K562 (cell line): ENCODE measurements at regions of chr5 and their contacts with region 1.

Region 1: GRCh38 chr5:79020861-79021561 is 35.9 kb upstream of the ARSB start:
- DNase-seq: peak; percentile 18 to 61 (median 40)
- ATAC-seq: peak; percentile 91
- H3K4me3 ChIP-seq: no peak overlapping the region
- H3K27ac ChIP-seq: no peak overlapping the region
- H3K4me1 ChIP-seq: no peaks in the 10 kb centered on the region; a peak in 1 of 5 replicates
- H3K27me3 ChIP-seq: no peaks in the 10 kb centered on the region; a peak in 2 of 5 replicates
- CTCF ChIP-seq: peak; percentile 80 to 88 (median 86)
- EP300 ChIP-seq: no peak
- POLR2A ChIP-seq: no peak
- RAD21 ChIP-seq: peak; percentile 85 to 89

Region 2: GRCh38 chr5:78899922-78900362 is 121.1 kb before region 1 on chr5:
- CTCF ChIA-PET with region 1: interaction called, 5 read pairs
- POLR2A ChIA-PET with region 1: no interaction called
- in situ Hi-C with region 1: no loop called
- intact Hi-C with region 1: loop called (anchors 1 kb)
- DNase-seq: peak; percentile 55 to 74 (median 62)
- ATAC-seq: peak; percentile 86
- H3K4me3 ChIP-seq: no peak overlapping the region
- H3K27ac ChIP-seq: no peak overlapping the region
- H3K4me1 ChIP-seq: no peaks in the 10 kb centered on the region
- H3K27me3 ChIP-seq: peaks cover 0 to 4% of the 10 kb centered on the region in 2 experiments; a peak in 2 of 5 replicates
- CTCF ChIP-seq: peak; percentile 81 to 90 (median 83)
- EP300 ChIP-seq: no peak
- POLR2A ChIP-seq: no peak
- RAD21 ChIP-seq: peak; percentile 71 to 90

Region 3: GRCh38 chr5:79133657-79134451 is 112.8 kb after region 1 on chr5:
- CTCF ChIA-PET with region 1: interaction called, 62 read pairs
- POLR2A ChIA-PET with region 1: interaction called, 10 read pairs
- in situ Hi-C with region 1: loop called (anchors 5 kb)
- intact Hi-C with region 1: loop called (anchors 1 kb)
- DNase-seq: peak; percentile 49 to 83 (median 52)
- ATAC-seq: peak; percentile 89
- H3K4me3 ChIP-seq: 0 out of 2 replicates have a peak overlapping the region, but pooled peaks have one; percentile 7
- H3K27ac ChIP-seq: peak overlapping the region; percentile 27; the same call in 1 of the 3 replicates
- H3K4me1 ChIP-seq: peaks cover 3% of the 10 kb centered on the region in 2 experiments; a peak in 1 of 5 replicates
- H3K27me3 ChIP-seq: no peaks in the 10 kb centered on the region
- CTCF ChIP-seq: peak; percentile 84 to 90 (median 87)
- EP300 ChIP-seq: peak; percentile 50
- POLR2A ChIP-seq: no peak
- RAD21 ChIP-seq: peak; percentile 77 to 82

Region 4: GRCh38 chr5:79474367-79475151 is 453.5 kb after region 1 on chr5:
- CTCF ChIA-PET with region 1: no interaction called
- POLR2A ChIA-PET with region 1: no interaction called
- in situ Hi-C with region 1: loop called (anchors 10 kb)
- intact Hi-C with region 1: no loop called
- DNase-seq: no peak
- ATAC-seq: no peak
- H3K4me3 ChIP-seq: no peak overlapping the region
- H3K27ac ChIP-seq: no peak overlapping the region
- H3K4me1 ChIP-seq: no peaks in the 10 kb centered on the region
- H3K27me3 ChIP-seq: no peaks in the 10 kb centered on the region
- CTCF ChIP-seq: no peak
- EP300 ChIP-seq: no peak
- POLR2A ChIP-seq: no peak
- RAD21 ChIP-seq: no peak

Region 5: DNA sequence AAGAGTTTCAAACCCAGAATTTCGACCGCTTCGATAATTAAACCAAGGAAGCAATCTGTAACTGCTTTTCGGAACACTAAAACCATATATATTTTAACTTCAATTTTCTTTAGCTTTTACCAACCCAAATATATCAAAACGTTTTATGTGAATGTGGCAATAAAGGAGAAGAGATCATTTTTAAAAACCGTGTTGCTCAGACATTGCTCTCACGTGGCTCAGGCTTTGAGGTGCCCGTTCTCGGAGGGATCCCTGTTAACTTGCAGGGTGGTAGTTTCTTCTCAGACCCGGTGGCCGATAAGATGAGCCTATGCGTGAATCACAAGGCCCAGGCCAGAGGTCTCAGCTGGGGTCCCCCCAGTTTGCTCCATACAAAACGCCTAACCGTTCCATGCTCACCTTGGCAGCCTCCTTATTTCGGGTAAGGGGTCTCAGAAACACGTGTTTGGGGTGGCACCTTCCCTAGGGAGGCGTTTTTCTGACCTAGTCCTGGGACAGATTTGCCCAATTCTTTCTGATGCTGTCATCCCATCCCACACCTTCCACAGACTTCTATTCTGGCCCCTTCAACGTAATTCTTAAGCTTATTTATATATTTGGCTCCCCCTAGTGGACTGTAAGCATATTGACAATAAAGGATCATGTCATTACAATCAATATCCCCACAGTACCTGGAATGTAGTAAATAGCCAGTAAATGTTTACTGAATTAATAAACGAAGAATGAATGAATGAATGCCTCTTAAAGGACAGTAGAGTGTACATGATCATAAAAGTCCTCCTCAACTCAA is 1062.3 kb after region 1 on chr5:
- CTCF ChIA-PET with region 1: interaction called, 9 read pairs
- POLR2A ChIA-PET with region 1: no interaction called
- in situ Hi-C with region 1: loop called (anchors 10 kb)
- intact Hi-C with region 1: loop called (anchors 2 kb)
- DNase-seq: peak; percentile 63 to 70 (median 63)
- ATAC-seq: peak; percentile 86
- H3K4me3 ChIP-seq: peak overlapping the region; percentile 3; the same call in 1 of the 2 replicates
- H3K27ac ChIP-seq: 0 out of 3 replicates have a peak overlapping the region, but pooled peaks have one; percentile 5
- H3K4me1 ChIP-seq: peaks cover 0 to 12% of the 10 kb centered on the region in 2 experiments; a peak in 3 of 5 replicates
- H3K27me3 ChIP-seq: peaks cover 0 to 7% of the 10 kb centered on the region in 2 experiments; a peak in 2 of 5 replicates
- CTCF ChIP-seq: peak; percentile 65 to 81 (median 71); a peak in 5 of 6 replicates
- EP300 ChIP-seq: no peak
- POLR2A ChIP-seq: no peak
- RAD21 ChIP-seq: peak; percentile 75 to 80